Activated T-helper 1 cell treated with anti-CD3 and anti-CD28 coated beads, Interleukin-12 subunit alpha, Interleukin-12 subunit beta, Interleukin-2, Interleukin-4 antibody, amounts not matched to agents 30 ng/mL and 10 ng/mL and 1 ng/mL, durations not matched to agents 14 hours and 24 hours and 36 hours (primary cell): ENCODE measurements at regions of chr12 and their contacts with region 1.

Region 1: GRCh38 chr12:110613771-110614684 is at the start of gene TCTN1:
- DNase-seq: peak; percentile 98
- H3K4me3 Mint-ChIP-seq: peak within 1 kb of the TSS; percentile 83
- H3K27ac Mint-ChIP-seq: peak within 1 kb of the TSS; percentile 81
- H3K4me1 Mint-ChIP-seq: peaks cover 8% of the 10 kb centered on the region
- H3K27me3 Mint-ChIP-seq: peaks cover 4% of the 10 kb centered on the region
- total RNA-seq, gene TCTN1: 7.6 and 8.8 TPM in 2 replicates

Region 2: GRCh38 chr12:110555577-110556406 is 58.2 kb before region 1 on chr12:
- intact Hi-C with region 1: no loop called
- DNase-seq: no peak
- H3K4me3 Mint-ChIP-seq: no peak overlapping the region
- H3K27ac Mint-ChIP-seq: peak overlapping the region; percentile 57
- H3K4me1 Mint-ChIP-seq: peaks cover 58% of the 10 kb centered on the region
- H3K27me3 Mint-ChIP-seq: no peaks in the 10 kb centered on the region

Region 3: GRCh38 chr12:110583137-110584059 is 30.6 kb before region 1 on chr12 and contains the start of gene PPTC7:
- intact Hi-C with region 1: loop called (anchors 1 kb)
- DNase-seq: peak; percentile 93
- H3K4me3 Mint-ChIP-seq: peak within 1 kb of the TSS; percentile 95
- H3K27ac Mint-ChIP-seq: peak within 1 kb of the TSS; percentile 96
- H3K4me1 Mint-ChIP-seq: peaks cover 61% of the 10 kb centered on the region
- H3K27me3 Mint-ChIP-seq: peaks cover 3% of the 10 kb centered on the region
- total RNA-seq, gene PPTC7: 57.9 and 59.1 TPM in 2 replicates

Region 4: DNA sequence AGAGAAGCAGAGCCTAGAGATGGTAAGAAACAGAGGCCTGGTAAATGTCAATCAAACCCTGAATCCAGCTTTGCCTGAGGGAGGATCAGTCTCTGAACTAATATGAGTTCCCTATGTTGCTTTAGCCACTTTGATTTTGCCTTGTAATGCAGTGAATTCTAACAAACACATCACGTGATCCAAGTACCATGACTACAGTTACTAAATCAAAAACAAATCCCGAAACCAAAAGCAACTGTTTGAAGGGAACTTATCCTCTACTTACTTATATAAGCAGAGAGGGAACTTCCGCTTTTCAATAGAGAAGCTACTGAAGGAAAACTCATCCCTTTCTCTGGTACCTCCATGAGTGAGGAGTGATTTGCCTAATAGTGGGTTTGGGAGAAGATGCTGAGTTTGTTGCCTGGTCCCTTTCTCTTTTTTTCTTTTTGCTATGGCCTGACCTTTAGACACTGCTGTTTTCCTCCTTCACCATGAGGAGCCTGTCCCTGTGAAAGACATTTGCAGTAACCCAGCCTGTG is 23.2 kb before region 1 on chr12:
- intact Hi-C with region 1: loop called (anchors 2 kb)
- DNase-seq: peak; percentile 24
- H3K4me3 Mint-ChIP-seq: peak overlapping the region; percentile 11
- H3K27ac Mint-ChIP-seq: peak overlapping the region; percentile 87
- H3K4me1 Mint-ChIP-seq: peaks cover 25% of the 10 kb centered on the region
- H3K27me3 Mint-ChIP-seq: no peaks in the 10 kb centered on the region